ENCODE measurements at regions of chr20 and their contacts with region 1.

Region 1: DNA sequence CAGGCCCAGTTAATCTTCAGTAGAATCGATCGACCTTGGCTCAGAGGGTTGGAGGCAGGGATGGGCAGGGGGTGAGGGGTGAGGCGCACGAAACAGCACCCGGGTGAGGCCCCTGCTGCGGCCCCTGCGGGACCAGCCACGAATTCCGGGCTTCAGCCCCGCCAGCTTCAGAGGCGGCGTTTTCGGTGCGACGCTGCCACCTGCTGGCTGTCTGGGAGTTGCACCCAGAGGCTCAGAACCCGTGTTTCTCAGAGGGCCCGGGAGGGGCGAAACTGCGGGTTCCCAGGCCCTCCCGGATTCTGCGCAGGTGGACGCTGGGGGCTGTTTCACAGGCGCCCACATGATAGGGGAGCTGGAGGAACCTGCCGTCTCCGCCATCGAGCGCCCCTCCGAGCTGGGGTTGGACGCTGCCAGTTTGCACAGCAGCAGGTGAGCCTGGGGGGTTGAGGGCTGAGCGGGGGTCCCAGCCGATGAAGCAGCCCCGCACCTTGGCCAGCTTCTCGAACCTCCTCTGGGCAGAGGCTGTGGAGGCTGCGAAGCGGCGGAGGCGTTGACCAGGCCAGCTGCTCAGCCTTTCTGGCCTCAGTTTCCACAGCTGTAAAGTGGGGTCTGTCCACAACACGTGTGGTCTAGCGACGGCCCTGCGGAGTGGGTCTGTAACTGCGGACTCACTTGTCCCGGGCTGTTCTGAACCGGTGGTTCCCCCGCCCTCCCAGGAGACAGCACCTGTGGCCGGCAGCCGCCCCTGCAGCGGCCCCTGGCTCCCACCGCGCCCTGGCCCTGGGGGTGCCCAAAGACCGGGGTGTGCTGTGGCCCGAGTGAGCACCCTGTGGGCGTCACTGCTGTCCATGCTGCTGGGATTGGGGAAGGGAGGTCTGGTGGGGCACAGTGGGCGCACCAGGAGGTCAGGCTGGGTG is 2.5 kb upstream of the BHLHE23 start:
- DNase-seq: peak; percentile 86
- ATAC-seq: peak; percentile 82
- H3K4me3 Mint-ChIP-seq: no peak overlapping the region
- H3K27ac Mint-ChIP-seq: no peak overlapping the region
- H3K4me1 Mint-ChIP-seq: peaks cover 22% of the 10 kb centered on the region
- H3K27me3 Mint-ChIP-seq: peaks cover 72% of the 10 kb centered on the region

Region 2: GRCh38 chr20:62861726-62862336 is 147.5 kb before region 1 on chr20 and contains the start of gene TCFL5:
- CTCF ChIA-PET with region 1: interaction called, 12 read pairs
- DNase-seq: peak; percentile 93
- ATAC-seq: peak; percentile 88
- H3K4me3 Mint-ChIP-seq: peak within 1 kb of the TSS; percentile 64
- H3K27ac Mint-ChIP-seq: peak within 1 kb of the TSS; percentile 5
- H3K4me1 Mint-ChIP-seq: peaks cover 20% of the 10 kb centered on the region
- H3K27me3 Mint-ChIP-seq: peaks cover 23% of the 10 kb centered on the region
- total RNA-seq, gene TCFL5: 6.6 to 6.7 TPM

Region 3: GRCh38 chr20:62900052-62900691 is 109.1 kb before region 1 on chr20:
- CTCF ChIA-PET with region 1: interaction called, 28 read pairs
- DNase-seq: peak; percentile 88
- ATAC-seq: peak; percentile 93
- H3K4me3 Mint-ChIP-seq: peak overlapping the region; percentile 41
- H3K27ac Mint-ChIP-seq: peak overlapping the region; percentile 70
- H3K4me1 Mint-ChIP-seq: peaks cover 52% of the 10 kb centered on the region
- H3K27me3 Mint-ChIP-seq: no peaks in the 10 kb centered on the region

Region 4: DNA sequence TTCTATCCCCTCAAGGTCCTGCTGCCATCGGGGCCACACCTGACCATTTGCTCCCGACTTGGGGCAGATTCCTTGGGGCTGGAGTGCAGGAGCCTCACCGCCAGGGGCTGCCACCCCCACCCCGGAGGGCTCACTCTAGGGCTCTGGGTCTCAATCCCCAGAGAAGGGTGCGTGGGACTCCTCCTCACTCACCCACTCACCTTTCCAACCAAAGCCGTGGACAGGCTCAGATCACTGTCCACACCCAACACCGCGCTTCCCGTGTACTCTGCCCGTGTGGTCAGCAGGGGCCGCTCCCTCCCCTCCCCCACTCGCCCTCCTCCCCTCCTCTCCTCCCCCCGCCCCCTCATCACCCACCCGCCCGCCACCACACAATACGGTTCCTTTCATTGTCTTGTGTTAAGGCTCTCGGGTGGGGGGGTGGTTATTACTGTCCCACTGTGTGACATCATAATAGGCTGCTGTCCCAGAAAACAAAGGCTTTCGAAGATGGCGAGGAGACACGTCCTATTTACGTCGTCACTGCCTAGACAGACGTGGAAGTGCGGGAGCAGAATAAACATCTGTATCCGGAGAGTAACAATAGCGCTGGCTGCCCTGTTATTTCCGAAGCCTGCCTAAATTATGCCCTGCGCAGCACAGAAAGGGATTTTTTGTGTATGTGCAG is 120.8 kb after region 1 on chr20:
- CTCF ChIA-PET with region 1: no interaction called
- DNase-seq: no peak
- ATAC-seq: no peak
- H3K4me3 Mint-ChIP-seq: no peak overlapping the region
- H3K27ac Mint-ChIP-seq: no peak overlapping the region
- H3K4me1 Mint-ChIP-seq: no peaks in the 10 kb centered on the region
- H3K27me3 Mint-ChIP-seq: peaks cover 5% of the 10 kb centered on the region